ENCODE measurements at regions of chr5 and their contacts with region 1.

Region 1: GRCh38 chr5:148887123-148887881 is 60.9 kb downstream of the ADRB2 start:
- DNase-seq: no peak
- H3K4me3 Mint-ChIP-seq: no peak overlapping the region
- H3K27ac Mint-ChIP-seq: no peak overlapping the region
- H3K4me1 Mint-ChIP-seq: peaks cover 8% of the 10 kb centered on the region
- H3K27me3 Mint-ChIP-seq: peaks cover 22% of the 10 kb centered on the region

Region 2: DNA sequence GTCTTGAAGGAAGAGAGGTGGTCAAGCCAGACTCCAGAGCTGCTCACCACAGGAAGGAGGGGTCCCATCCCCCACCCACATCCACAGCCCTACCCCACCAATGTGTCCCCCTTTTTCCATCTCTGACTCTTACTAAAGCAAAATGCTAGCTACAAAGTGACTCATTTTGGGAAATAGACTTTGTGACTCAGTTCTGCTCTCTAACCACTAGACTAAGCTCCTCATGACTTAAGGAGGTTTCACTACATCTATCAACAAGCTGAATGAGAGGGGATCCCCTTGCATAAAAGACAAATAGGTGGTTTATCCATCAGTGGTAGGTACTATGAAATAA is 96.0 kb before region 1 on chr5:
- CTCF ChIA-PET with region 1: no interaction called
- POLR2A ChIA-PET with region 1: interaction called, 4 read pairs
- intact Hi-C with region 1: loop called (anchors 1 kb)
- DNase-seq: peak; percentile 77
- H3K4me3 Mint-ChIP-seq: no peak overlapping the region
- H3K27ac Mint-ChIP-seq: no peak overlapping the region
- H3K4me1 Mint-ChIP-seq: peaks cover 24% of the 10 kb centered on the region
- H3K27me3 Mint-ChIP-seq: peaks cover 33% of the 10 kb centered on the region

Region 3: DNA sequence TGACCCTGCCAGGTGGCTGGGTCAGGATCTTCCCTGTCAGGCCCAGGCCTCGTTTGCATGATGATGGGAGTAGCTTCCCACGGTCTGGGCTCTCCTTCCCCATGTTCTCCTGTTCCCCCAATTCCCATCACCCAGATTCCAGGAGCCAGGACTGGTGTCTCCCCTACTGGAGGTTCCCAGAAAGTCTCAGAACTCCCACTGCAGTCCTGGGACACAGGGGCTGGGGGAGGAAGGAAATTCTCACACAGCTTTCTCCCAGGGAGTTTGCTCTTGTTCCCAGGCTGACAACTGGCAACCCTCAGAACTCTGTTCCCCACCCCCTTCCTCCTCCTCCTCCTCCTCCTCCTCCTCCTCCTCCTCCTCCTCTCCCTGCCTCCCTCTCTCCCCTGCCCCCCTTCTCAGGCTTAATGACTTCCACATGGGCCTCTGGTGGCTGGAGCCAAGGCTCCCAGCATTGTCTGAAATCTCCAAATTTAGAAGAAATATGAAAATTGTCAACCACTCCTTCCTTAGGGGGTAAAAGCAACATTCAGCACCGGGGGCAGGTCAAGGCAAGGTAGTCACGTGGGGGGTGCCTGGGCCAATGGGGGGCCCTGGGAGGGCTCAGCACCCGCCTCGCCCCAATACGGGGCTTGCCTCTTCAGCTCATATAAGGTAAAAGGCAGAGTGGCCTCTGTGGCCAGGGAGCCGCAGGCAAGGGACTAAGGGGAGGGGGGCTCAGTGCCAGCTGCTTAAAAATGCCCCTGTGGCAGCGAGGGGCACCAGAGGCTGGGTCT is 519.1 kb after region 1 on chr5:
- CTCF ChIA-PET with region 1: no interaction called
- POLR2A ChIA-PET with region 1: no interaction called
- intact Hi-C with region 1: no loop called
- DNase-seq: no peak
- H3K4me3 Mint-ChIP-seq: no peak overlapping the region
- H3K27ac Mint-ChIP-seq: no peak overlapping the region
- H3K4me1 Mint-ChIP-seq: no peaks in the 10 kb centered on the region
- H3K27me3 Mint-ChIP-seq: peaks cover 3% of the 10 kb centered on the region

Measured in activated CD4-positive, alpha-beta memory T cell treated with anti-CD3 and anti-CD28 coated beads for 36 hours (primary cell).